AG04449 (cell line): ENCODE measurements at regions of chrX and their contacts with region 1.

Region 1: GRCh38 chrX:70030301-70030767 is 19.4 kb downstream of the AWAT2 start:
- DNase-seq: no peak
- H3K4me3 ChIP-seq: no peak overlapping the region
- CTCF ChIP-seq: peak; percentile 70

Region 2: DNA sequence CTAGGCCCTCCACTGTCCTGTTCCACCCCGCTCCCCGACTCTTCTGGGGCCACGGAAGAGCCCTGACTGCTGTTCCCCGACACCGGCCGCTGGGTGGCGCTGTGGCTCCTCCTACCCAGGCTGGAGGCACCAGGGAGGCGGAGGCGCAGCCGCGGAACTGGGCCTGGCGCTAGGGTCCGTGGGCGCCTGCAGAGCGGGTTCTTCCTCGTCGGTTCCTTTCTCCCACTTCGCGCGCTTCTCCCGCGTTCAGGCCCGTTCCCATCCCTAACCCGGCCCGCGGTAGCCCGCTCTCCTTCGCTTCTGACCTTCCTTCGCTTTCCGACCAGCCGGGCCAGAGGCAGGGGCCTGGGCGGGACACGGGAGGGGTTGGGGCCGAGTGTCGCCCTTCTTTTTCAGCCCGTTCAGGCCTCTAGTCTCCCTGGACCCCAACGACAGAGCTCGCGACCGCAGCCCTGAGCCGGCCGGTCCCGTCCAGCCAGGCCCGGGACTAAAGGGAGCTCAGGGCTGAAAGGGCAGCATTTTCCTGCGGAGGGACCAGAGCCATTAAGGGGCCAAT is 491.9 kb before region 1 on chrX:
- CTCF ChIA-PET with region 1: interaction called, 14 read pairs
- POLR2A ChIA-PET with region 1: no interaction called
- DNase-seq: no peak
- H3K4me3 ChIP-seq: peak overlapping the region; percentile 37
- CTCF ChIP-seq: peak; percentile 78